Dendritic cell treated with granulocyte-macrophage colony-stimulating factor and Interleukin-4, amounts not matched to agents 40 ng/mL and 50 ng/mL, for 4 days (primary cell): ENCODE measurements at regions of chr15 and their contacts with region 1.

Region 1: DNA sequence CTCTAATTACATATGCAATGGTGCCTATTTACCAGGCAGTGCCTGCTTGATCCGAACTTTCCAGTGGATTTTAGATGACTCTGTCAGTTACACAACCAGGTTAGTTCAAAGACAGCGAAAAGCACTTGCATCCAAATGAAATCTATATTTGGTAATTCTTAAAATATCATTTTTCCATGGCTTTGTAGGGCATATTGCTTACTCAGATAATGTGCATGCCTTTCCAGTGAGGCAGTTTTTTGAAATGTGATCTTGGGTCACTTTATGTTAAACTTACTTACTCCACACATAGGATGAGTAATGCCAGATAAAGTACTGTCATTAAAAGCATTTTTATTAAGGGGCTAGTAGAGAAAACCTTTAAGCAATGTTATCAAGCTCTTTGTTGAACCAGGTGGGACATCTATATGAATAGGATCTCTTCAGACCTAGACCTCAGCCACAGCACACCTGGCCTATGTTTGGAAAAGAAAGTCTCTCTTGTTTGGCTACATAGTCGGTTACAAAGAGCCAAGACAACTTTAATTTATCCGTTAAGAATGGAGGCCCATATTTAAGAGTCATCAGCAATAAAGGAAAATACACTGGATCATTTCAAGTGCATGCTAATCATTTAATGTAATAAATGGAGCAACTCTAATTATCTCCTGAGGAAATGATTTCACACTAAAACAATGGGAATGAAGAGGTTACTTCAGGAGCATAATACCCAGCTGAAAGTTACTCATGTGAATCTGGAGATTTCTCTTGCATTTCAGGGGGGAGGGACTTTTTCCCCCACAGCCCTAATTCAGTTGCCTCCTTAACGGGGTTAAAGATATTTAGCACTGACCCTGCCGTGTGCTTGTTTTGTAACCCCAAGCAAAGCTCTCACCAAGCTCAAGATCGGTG is 56.3 kb upstream of the TMCO5A start:
- H3K4me3 Mint-ChIP-seq: no peak overlapping the region
- H3K27ac Mint-ChIP-seq: no peak overlapping the region
- H3K4me1 Mint-ChIP-seq: no peaks in the 10 kb centered on the region
- H3K27me3 Mint-ChIP-seq: no peaks in the 10 kb centered on the region

Region 2: DNA sequence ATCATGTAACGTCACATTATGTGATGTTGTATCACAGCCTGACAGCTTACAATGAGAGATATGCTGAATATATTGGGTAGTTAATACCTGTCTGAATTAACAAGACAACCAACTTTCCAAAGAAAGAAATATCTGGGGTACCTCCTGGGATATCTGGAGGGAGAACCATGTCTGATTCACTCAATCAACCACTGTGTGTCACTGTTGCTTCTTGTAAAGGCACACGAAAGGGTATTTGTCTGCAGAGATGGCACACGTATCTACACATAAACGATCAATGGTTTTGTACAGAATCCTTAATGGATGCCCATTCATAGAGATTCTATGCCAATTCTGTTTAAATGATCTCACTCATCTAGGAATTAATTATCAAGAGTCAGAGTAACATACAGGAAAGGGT is 195.8 kb before region 1 on chr15:
- intact Hi-C with region 1: loop called (anchors 10 kb)
- H3K4me3 Mint-ChIP-seq: no peak overlapping the region
- H3K27ac Mint-ChIP-seq: no peak overlapping the region
- H3K4me1 Mint-ChIP-seq: no peaks in the 10 kb centered on the region
- H3K27me3 Mint-ChIP-seq: no peaks in the 10 kb centered on the region

Region 3: DNA sequence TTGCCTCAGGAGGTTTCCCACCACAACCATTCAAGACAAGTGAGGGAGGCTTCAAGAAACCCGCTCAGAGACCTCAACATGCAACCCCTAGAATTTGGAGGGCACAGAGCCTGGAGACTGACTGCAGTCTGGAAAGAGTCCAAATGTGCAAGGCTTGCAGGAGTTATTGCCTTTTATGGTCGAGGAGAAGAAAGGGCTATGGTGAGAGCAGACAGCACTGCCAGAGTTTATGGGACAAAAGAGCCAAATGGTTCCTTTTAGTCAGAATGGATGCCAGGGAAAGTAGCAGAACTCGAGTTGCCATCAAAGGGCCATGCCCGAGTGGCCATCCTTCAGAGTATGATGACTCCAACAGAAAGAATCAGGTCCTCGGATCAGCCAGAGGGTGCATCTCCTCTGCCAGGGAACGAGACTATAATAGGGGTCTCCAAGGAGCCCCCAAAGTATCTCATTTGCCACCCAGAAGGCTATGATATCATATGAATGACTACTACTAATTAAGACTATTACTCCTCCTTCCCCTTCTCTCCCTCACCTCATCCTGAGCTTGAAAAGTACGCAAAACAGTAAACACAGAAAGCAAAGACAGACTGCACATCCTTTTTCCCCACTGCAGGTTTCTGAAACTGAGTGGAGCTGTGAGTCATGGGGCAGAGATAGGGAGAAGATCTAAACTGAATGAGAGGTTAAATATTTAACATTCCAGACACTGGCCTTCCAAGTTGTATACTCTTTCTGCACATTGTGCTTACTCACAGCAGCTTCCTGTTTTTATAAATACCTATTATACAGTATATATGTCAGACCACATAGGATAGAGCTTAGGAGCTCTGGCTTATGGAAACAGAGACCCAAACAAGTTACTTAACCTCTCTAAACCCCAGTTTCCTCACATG is 22.5 kb after region 1 on chr15:
- intact Hi-C with region 1: no loop called
- H3K4me3 Mint-ChIP-seq: no peak overlapping the region
- H3K27ac Mint-ChIP-seq: no peak overlapping the region
- H3K4me1 Mint-ChIP-seq: no peaks in the 10 kb centered on the region
- H3K27me3 Mint-ChIP-seq: peaks cover 1% of the 10 kb centered on the region